ENCODE measurements at regions of chr17 and their contacts with region 1.

Region 1: GRCh38 chr17:7314719-7315569 is at the start of gene GPS2:
- DNase-seq: peak; percentile 96
- H3K4me3 Mint-ChIP-seq: peak within 1 kb of the TSS; percentile 87
- H3K27ac Mint-ChIP-seq: peak within 1 kb of the TSS; percentile 88
- H3K4me1 Mint-ChIP-seq: peaks cover 51% of the 10 kb centered on the region
- H3K27me3 Mint-ChIP-seq: no peaks in the 10 kb centered on the region
- total RNA-seq, gene GPS2: 34.9 to 38.7 TPM

Region 2: GRCh38 chr17:7252176-7253043 is 62.5 kb before region 1 on chr17 and contains the start of gene ELP5:
- CTCF ChIA-PET with region 1: no interaction called
- POLR2A ChIA-PET with region 1: no interaction called
- intact Hi-C with region 1: no loop called
- DNase-seq: peak; percentile 94
- H3K4me3 Mint-ChIP-seq: peak within 1 kb of the TSS; percentile 96
- H3K27ac Mint-ChIP-seq: peak within 1 kb of the TSS; percentile 100
- H3K4me1 Mint-ChIP-seq: peaks cover 40% of the 10 kb centered on the region
- H3K27me3 Mint-ChIP-seq: no peaks in the 10 kb centered on the region
- total RNA-seq, gene ELP5: 49.6 to 52.4 TPM

Region 3: GRCh38 chr17:7289256-7290032 is 25.5 kb before region 1 on chr17:
- CTCF ChIA-PET with region 1: no interaction called
- POLR2A ChIA-PET with region 1: no interaction called
- intact Hi-C with region 1: no loop called
- DNase-seq: no peak
- H3K4me3 Mint-ChIP-seq: no peak overlapping the region
- H3K27ac Mint-ChIP-seq: no peak overlapping the region
- H3K4me1 Mint-ChIP-seq: peaks cover 5% of the 10 kb centered on the region
- H3K27me3 Mint-ChIP-seq: peaks cover 17% of the 10 kb centered on the region

Region 4: DNA sequence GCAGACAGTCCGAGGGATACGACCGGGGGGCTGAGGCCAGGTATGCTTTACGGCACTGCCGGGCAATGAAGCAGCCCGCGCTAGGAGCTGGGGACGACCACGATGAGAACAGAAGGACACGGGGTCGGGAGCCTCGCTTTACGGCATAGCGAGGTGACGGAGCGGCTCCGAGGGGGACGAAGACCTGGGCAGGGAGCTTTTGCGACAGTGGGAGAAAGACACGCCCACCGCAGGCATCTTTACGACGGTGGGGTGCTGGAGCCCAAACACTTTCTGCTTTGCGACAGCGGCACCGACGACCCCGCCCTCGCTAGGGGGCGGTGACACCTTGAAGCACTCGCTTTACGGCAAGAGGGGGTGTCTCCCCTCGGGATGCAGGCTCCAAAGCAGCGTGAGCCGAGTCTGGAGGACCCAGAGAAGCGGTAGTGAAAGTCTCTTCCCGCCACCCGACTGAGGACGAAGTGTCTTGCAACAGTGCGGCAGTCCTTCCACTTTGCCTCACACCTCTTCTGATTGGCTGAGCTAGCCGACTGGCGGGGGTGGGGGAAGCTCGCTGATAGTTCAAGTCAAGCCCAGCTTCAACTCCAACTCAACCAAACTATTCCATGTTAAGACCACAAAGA is 14.5 kb after region 1 on chr17:
- CTCF ChIA-PET with region 1: interaction called, 9 read pairs
- POLR2A ChIA-PET with region 1: interaction called, 19 read pairs
- intact Hi-C with region 1: loop called (anchors 1 kb)
- DNase-seq: peak; percentile 98
- H3K4me3 Mint-ChIP-seq: peak overlapping the region; percentile 89
- H3K27ac Mint-ChIP-seq: peak overlapping the region; percentile 94
- H3K4me1 Mint-ChIP-seq: peaks cover 41% of the 10 kb centered on the region
- H3K27me3 Mint-ChIP-seq: no peaks in the 10 kb centered on the region

Region 5: DNA sequence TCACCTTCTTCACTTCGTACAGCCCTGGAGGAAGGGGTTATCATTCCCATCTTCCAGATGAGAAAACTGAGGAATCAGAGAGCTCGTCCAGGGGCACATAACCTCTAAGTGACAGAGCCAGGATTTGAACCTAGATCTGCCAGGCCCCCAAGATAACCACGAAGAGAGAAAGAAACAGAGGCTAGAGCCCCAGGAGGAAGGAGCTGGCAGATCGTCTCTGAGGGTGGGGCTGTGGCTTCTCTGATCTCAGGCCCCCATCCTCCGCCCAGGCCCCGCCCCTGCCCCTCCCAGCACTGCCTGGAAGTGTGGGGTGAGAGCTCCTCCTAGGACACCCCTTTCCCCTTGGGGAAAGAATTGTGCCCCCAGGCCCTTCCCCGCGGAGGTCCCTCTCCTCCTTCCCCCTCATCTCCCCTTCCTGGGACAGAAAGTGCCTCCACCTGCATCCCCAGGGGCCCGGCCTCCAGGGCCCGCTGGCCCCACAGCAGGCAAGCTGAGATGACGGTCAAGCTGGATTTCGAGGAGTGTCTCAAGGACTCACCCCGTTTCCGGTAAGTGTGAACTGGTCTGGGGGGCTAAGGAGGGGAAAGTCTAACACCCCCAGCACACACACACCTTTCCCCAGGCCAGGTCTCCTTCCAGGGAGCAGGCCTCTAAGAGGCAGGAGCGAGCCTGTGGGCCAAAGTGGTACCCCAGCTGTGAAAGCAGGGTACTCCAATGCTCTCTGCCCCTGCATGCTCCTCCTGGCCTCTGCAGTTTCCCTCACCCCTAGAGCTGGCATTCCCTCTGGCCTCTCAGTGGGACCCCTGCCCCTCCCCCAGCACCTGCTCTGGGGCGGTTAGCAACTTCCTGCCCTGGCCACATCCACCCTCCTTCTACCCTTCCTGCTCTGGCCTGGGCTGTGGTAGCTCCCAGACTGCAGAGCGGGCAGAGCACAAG is 21.6 kb after region 1 on chr17 and contains the start of gene ACAP1:
- CTCF ChIA-PET with region 1: no interaction called
- POLR2A ChIA-PET with region 1: interaction called, 19 read pairs
- intact Hi-C with region 1: no loop called
- DNase-seq: peak; percentile 93
- H3K4me3 Mint-ChIP-seq: peak within 1 kb of the TSS; percentile 91
- H3K27ac Mint-ChIP-seq: peak within 1 kb of the TSS; percentile 98
- H3K4me1 Mint-ChIP-seq: peaks cover 51% of the 10 kb centered on the region
- H3K27me3 Mint-ChIP-seq: no peaks in the 10 kb centered on the region
- total RNA-seq, gene ACAP1: 391 to 405 TPM